HCT116 (cell line): ENCODE measurements at regions of chr7 and their contacts with region 1.

Region 1: DNA sequence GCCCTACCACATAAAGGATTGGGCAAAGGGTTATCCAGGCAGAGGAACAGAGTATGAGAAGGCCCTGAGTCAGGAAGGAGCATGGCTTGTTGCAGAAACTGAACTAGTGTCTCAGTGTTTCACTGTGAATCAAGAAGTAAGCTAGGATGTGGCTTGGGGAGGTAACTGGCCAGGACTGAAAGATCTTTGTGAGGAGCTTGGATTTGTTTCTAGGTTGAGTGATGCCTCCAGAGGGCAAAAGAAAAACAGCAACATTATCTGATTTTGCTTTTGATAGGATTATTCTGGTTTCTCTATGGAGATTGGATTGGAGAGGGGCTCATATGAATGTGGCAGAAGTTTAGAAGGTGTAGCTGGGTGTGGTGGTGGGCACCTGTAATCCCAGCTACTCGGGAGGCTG is 137.9 kb upstream of the HDAC9 start:
- DNase-seq: no peak
- ATAC-seq: peak; percentile 71
- H3K4me3 ChIP-seq: no peak overlapping the region
- H3K27ac ChIP-seq: no peak overlapping the region
- H3K4me1 ChIP-seq: peaks cover 0 to 3% of the 10 kb centered on the region in 2 experiments; a peak in 2 of 4 replicates
- H3K27me3 ChIP-seq: no peaks in the 10 kb centered on the region
- CTCF ChIP-seq: peak in 2 of 3 experiments; percentile 38 to 45; a peak in 4 of 6 replicates
- POLR2A ChIP-seq: no peak
- RAD21 ChIP-seq: no peak

Region 2: DNA sequence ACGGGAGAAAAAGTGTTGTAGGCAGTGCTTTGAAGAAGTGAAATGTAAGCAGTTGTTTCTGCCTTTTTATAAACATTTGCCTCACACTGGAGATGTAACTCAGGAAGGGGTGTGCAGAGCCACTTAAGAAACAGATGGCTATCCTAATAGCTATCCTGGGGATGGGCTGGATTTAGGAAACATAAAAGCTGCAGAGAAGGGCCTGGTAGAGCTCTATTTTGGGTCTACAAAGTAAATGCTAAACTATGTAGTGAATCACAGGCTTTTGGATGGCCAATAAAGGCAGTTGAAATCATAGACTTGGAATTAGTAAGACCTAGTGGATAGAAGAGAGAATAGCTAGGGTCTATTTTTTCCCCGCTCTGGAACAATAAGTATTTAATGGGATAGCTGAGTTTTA is 1396.0 kb before region 1 on chr7:
- CTCF ChIA-PET with region 1: no interaction called
- POLR2A ChIA-PET with region 1: no interaction called
- RAD21 ChIA-PET with region 1: no interaction called
- intact Hi-C with region 1: no loop called
- DNase-seq: no peak
- ATAC-seq: no peak
- H3K4me3 ChIP-seq: no peak overlapping the region
- H3K27ac ChIP-seq: no peak overlapping the region
- H3K4me1 ChIP-seq: no peaks in the 10 kb centered on the region; a peak in 1 of 4 replicates
- H3K27me3 ChIP-seq: no peaks in the 10 kb centered on the region
- CTCF ChIP-seq: no peak
- POLR2A ChIP-seq: no peak
- RAD21 ChIP-seq: no peak

Region 3: GRCh38 chr7:18330548-18330947 is 27.1 kb before region 1 on chr7:
- CTCF ChIA-PET with region 1: no interaction called
- POLR2A ChIA-PET with region 1: no interaction called
- RAD21 ChIA-PET with region 1: no interaction called
- intact Hi-C with region 1: no loop called
- DNase-seq: no peak
- ATAC-seq: no peak
- H3K4me3 ChIP-seq: no peak overlapping the region
- H3K27ac ChIP-seq: no peak overlapping the region
- H3K4me1 ChIP-seq: no peaks in the 10 kb centered on the region
- H3K27me3 ChIP-seq: no peaks in the 10 kb centered on the region
- CTCF ChIP-seq: no peak
- POLR2A ChIP-seq: no peak
- RAD21 ChIP-seq: no peak

Region 4: DNA sequence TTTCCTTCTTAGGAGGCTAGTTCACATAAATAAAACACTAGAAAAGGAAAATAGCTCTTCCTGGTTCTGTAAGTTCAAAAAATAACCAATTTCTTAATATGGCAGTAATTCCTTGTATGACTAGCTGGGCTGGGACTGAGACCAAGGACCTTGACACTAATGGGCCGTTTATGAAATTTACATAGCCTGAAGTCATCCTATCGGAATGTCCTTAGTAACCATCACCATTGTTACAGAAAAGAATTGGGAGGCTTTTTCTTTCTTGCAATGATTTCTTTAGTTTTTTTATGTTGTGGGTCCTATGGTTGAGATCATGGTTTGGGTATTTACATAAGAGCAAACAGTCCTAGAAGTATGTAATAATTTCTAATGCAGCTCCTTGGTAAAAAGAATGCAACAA is 50.8 kb after region 1 on chr7:
- CTCF ChIA-PET with region 1: no interaction called
- POLR2A ChIA-PET with region 1: no interaction called
- RAD21 ChIA-PET with region 1: no interaction called
- intact Hi-C with region 1: no loop called
- DNase-seq: no peak
- ATAC-seq: no peak
- H3K4me3 ChIP-seq: no peak overlapping the region
- H3K27ac ChIP-seq: no peak overlapping the region
- H3K4me1 ChIP-seq: no peaks in the 10 kb centered on the region
- H3K27me3 ChIP-seq: no peaks in the 10 kb centered on the region
- CTCF ChIP-seq: no peak
- POLR2A ChIP-seq: no peak
- RAD21 ChIP-seq: no peak

Region 5: GRCh38 chr7:18570890-18571478 is 213.3 kb after region 1 on chr7:
- CTCF ChIA-PET with region 1: interaction called, 93 read pairs
- POLR2A ChIA-PET with region 1: interaction called, 7 read pairs
- RAD21 ChIA-PET with region 1: interaction called, 7 to 8 read pairs
- intact Hi-C with region 1: loop called (anchors 1 kb)
- DNase-seq: peak; percentile 31
- ATAC-seq: peak; percentile 66; the same call in 1 of the 2 replicates
- H3K4me3 ChIP-seq: no peak overlapping the region
- H3K27ac ChIP-seq: no peak overlapping the region
- H3K4me1 ChIP-seq: peaks cover under 1 to 1% of the 10 kb centered on the region in 2 experiments; a peak in 2 of 4 replicates
- H3K27me3 ChIP-seq: no peaks in the 10 kb centered on the region
- CTCF ChIP-seq: peak; percentile 32 to 68 (median 59); a peak in 4 of 6 replicates
- POLR2A ChIP-seq: no peak
- RAD21 ChIP-seq: peak; percentile 64

Region 6: GRCh38 chr7:18700147-18700546 is 342.5 kb after region 1 on chr7:
- CTCF ChIA-PET with region 1: no interaction called
- POLR2A ChIA-PET with region 1: no interaction called
- RAD21 ChIA-PET with region 1: no interaction called
- intact Hi-C with region 1: no loop called
- DNase-seq: peak; percentile 4
- ATAC-seq: peak; percentile 49; the same call in 1 of the 2 replicates
- H3K4me3 ChIP-seq: no peak overlapping the region
- H3K27ac ChIP-seq: no peak overlapping the region
- H3K4me1 ChIP-seq: no peaks in the 10 kb centered on the region
- H3K27me3 ChIP-seq: no peaks in the 10 kb centered on the region
- CTCF ChIP-seq: peak in 2 of 3 experiments; percentile 46 to 49; a peak in 3 of 6 replicates
- POLR2A ChIP-seq: no peak
- RAD21 ChIP-seq: no peak